Prostate gland (tissue), 2 donors: ENCODE measurements at regions of chr19 and their contacts with region 1.

Region 1: DNA sequence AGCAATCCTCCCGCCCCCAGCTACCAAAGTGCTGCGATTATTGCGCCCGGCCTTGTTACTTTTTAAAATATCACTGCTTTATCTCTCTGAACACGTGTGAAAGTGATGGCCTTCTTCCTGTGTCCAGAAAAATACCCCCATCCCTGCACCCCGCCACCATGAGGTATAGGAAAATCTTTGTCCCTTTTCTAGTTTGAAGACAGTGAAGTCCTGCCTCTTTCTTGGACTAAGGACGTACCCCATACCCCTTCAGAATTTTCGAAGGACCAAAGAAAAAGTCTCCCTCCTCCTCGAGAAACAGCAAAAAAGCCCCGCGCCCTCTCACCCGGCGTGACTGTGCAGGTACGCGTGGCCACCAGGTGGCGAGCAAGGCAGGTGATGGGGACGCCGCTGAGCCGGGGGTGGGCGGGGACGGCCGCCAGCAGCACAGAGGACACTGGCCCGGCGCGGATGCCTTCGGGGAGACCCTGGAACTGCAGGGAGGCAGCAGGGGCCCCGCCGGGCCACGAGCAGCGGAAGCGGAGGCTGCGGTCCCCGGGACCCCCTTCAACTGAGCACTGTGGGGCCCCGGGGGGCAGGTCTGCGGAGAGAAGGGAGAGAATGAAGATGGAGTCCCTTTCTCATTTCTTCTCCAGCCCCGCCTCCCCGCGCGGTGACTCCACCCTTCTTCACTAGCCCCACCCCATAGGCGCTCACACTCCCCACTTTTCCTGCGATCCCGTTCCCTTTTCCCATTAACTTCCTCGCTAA is 3.2 kb downstream of the VSIG10L start:
- DNase-seq: peak; percentile 75
- H3K4me3 ChIP-seq: peak overlapping the region; percentile 43 to 52
- H3K27ac ChIP-seq: peak overlapping the region; percentile 53 to 58
- H3K4me1 ChIP-seq: no peaks in the 10 kb centered on the region
- H3K27me3 ChIP-seq: no peaks in the 10 kb centered on the region
- CTCF ChIP-seq: peak; percentile 85 to 91 (median 86)
- POLR2A ChIP-seq: peak; percentile 25

Region 2: DNA sequence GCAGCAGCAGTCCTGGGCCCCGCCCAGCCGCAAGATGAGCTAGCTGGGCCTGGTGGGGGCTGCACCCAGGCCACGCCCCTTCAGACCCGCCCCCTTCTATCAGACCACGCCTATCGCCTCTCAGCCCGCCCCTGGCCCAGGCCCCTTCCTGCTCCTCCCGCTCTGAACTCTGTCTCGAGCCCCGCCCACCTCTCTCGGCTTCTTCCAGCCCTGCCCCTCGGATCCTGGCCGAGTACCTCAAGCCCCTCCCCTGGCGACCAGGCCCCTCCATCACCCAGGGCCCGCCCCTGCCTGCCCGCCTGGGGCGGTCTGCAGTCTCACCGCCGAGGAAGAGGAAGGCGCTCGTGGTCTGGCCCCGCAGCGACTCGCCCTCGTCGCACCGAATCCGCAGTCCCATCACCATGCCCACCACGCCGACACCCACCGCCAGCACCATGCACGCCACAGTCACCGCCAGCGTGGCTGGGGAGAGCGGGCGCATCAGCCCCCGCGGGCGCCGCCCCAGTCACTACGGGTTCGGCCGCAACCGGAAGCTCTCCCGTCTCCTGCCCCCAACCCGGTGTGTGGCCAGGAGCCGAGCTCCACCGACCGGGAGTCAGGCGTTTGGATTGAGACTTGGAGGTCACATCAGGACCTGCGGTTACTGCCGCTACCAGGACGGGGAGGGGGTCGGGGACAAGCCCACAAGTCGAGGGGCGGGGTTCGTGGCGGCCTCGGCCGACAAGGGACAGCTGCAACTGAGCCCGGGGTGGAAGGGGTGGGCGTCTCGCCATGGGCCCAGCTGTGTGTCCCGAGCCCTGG is 29.0 kb after region 1 on chr19:
- intact Hi-C with region 1: loop called (anchors 2 kb)
- DNase-seq: peak; percentile 98
- H3K4me3 ChIP-seq: peak overlapping the region; percentile 61 to 76
- H3K27ac ChIP-seq: peak overlapping the region; percentile 85 to 86
- H3K4me1 ChIP-seq: peaks cover 8% of the 10 kb centered on the region
- H3K27me3 ChIP-seq: no peaks in the 10 kb centered on the region
- CTCF ChIP-seq: peak in 1 of 4 experiments; percentile 31
- POLR2A ChIP-seq: peak; percentile 1

Region 3: GRCh38 chr19:51393959-51394836 is 55.5 kb after region 1 on chr19:
- intact Hi-C with region 1: loop called (anchors 5 kb)
- DNase-seq: peak; percentile 94
- H3K4me3 ChIP-seq: peak overlapping the region; percentile 16 to 31
- H3K27ac ChIP-seq: peak overlapping the region; percentile 70 to 76
- H3K4me1 ChIP-seq: no peaks in the 10 kb centered on the region
- H3K27me3 ChIP-seq: no peaks in the 10 kb centered on the region
- CTCF ChIP-seq: peak in 3 of 4 experiments; percentile 15 to 25 (median 22)
- POLR2A ChIP-seq: no peak

Region 4: DNA sequence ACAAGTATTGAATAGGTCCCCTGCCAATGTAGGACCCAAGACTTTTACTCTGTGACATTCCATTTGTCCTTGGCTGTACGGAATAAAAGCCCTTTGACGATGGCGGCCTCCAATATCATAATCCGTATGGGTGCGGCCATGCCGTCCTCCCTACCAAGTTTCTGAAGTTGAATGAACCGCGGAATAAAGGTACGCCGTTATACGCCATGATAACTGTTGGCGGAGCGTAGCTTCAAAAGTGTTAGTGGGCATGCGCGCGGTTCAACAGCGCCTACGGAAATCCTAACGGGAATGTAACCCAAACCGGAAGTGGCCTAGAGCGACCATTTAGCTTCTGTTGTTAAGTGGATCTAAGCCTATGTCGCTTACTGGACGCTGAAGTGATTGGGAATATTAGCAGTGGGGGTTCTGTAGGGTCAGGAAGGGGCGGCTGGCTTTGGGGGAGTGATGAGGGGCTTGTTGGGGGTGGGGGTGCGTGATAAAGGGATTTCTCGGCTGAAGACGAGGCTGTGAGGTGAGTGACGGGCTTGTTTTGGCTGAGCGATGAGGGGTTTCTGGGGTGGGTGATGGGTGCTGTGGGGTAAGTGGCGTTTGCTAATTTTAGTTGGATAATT is 232.3 kb after region 1 on chr19 and contains the start of gene ZNF175:
- intact Hi-C with region 1: loop called (anchors 5 kb)
- DNase-seq: peak; percentile 94
- H3K4me3 ChIP-seq: peak within 1 kb of the TSS; percentile 43 to 65
- H3K27ac ChIP-seq: peak within 1 kb of the TSS; percentile 13 to 33
- H3K4me1 ChIP-seq: no peaks in the 10 kb centered on the region
- H3K27me3 ChIP-seq: no peaks in the 10 kb centered on the region
- CTCF ChIP-seq: no peak
- POLR2A ChIP-seq: peak; percentile 40
- total RNA-seq, gene ZNF175: 4.3 to 9.0 TPM

Region 5: DNA sequence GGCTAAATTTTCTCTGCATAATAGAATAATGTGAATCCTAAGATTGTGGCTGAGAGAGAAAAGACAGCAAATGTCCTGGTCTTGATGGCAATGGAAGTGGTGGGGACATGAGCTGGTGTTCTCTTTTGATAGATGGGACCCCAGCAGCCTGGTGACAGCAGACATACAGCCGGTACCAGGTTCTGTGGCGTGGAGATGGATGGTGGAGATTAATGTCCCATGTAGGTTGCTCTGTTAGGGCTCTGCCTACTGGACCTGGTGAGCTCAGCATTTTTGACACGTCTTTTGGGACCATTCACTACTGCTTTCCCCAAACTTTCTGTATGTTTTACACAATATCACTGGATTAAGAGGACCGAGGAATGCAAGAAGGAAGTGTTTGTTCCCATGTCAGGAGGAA is 316.0 kb after region 1 on chr19:
- intact Hi-C with region 1: loop called (anchors 5 kb)
- DNase-seq: no peak
- H3K4me3 ChIP-seq: no peak overlapping the region
- H3K27ac ChIP-seq: no peak overlapping the region
- H3K4me1 ChIP-seq: no peaks in the 10 kb centered on the region
- H3K27me3 ChIP-seq: no peaks in the 10 kb centered on the region
- CTCF ChIP-seq: no peak
- POLR2A ChIP-seq: no peak